T-cell (primary cell): ENCODE measurements at regions of chr10 and their contacts with region 1.

Region 1: DNA sequence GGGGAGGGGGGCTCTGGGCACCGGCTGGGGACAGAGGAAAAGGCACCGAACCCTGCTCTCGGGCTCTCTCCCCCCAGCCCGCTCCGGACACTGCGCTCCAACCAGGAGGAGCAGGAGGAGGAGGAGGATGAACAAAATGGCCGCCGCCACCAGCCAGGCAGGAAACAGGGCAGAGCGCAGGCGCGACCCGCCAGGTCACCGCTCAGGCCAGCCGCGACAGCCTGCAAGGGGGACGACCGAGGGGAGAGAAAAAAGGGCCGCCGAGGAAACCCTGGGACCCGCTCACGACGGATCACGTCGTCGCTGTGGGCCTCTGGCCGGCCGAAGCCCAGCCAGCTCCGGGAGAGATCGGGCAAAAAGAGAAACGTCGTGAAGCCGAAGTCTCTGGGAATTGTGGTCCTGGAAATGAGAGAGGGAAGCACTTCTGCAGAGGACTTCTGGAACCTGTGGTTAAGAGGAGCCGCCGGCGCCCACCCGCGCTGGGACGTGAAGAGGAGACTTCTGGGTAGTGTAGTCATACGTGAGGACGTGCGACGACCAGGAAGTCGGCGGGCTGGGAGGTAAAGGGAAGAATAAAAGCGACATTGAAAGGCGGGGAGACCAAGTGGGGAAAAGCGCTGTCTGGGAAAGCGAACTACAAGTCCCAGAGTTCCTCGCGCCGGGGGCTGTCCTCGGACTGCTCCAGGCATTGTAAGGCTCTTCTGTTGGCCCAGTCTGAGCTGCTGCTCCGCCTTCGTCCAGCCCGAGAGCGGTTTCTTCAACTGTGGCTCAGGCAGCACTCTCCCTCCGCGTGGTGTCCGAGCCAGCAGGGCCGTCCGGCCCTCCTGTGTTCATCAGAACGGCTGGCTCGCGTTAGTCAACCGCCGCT is at the start of gene TIAL1:
- DNase-seq: peak; percentile 81 to 96 (median 88)
- ATAC-seq: peak; percentile 85 to 89 (median 88)
- H3K4me3 ChIP-seq: peak within 1 kb of the TSS; percentile 93 to 99
- H3K4me3 Mint-ChIP-seq: peak within 1 kb of the TSS; percentile 88 to 99 (median 99)
- H3K27ac ChIP-seq: peak within 1 kb of the TSS; percentile 94
- H3K27ac Mint-ChIP-seq: peak within 1 kb of the TSS; percentile 98
- H3K4me1 ChIP-seq: peaks cover 19 to 30% of the 10 kb centered on the region in 2 experiments
- H3K4me1 Mint-ChIP-seq: peaks cover 48 to 49% (median 48%) of the 10 kb centered on the region in 3 donors
- H3K27me3 ChIP-seq: no peaks in the 10 kb centered on the region
- H3K27me3 Mint-ChIP-seq: no peaks in the 10 kb centered on the region
- total RNA-seq, gene TIAL1: 147 to 197 (median 156) TPM

Region 2: DNA sequence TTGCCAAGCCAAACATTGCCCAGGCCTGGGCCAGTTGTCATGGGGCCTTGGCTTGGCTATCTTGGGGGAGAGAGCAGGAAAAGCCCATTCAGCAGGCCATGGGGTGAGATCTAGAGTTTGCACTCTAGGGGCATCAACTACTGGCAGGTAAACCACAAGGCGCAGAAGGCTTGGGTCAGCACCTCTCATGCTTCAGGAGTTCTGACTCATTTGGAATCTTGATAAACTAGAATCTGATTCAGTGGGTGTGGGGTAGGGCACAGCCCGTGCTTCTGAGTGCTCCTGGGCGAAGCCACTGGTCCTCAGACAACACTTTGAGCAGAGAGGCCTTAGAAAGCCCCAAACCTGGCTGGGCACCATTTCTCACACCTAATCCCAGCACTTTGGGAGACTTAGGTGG is 135.4 kb before region 1 on chr10:
- CTCF ChIA-PET with region 1: no interaction called
- POLR2A ChIA-PET with region 1: no interaction called
- DNase-seq: no peak
- ATAC-seq: no peak
- H3K4me3 ChIP-seq: no peak overlapping the region
- H3K4me3 Mint-ChIP-seq: no peak overlapping the region
- H3K27ac ChIP-seq: no peak overlapping the region
- H3K27ac Mint-ChIP-seq: no peak overlapping the region
- H3K4me1 ChIP-seq: peaks cover 0 to 9% of the 10 kb centered on the region in 2 experiments
- H3K4me1 Mint-ChIP-seq: peaks cover 0 to 14% (median 2%) of the 10 kb centered on the region in 3 donors
- H3K27me3 ChIP-seq: peaks cover 0 to 12% of the 10 kb centered on the region in 2 experiments
- H3K27me3 Mint-ChIP-seq: peaks cover 0 to 3% of the 10 kb centered on the region in 2 donors

Region 3: DNA sequence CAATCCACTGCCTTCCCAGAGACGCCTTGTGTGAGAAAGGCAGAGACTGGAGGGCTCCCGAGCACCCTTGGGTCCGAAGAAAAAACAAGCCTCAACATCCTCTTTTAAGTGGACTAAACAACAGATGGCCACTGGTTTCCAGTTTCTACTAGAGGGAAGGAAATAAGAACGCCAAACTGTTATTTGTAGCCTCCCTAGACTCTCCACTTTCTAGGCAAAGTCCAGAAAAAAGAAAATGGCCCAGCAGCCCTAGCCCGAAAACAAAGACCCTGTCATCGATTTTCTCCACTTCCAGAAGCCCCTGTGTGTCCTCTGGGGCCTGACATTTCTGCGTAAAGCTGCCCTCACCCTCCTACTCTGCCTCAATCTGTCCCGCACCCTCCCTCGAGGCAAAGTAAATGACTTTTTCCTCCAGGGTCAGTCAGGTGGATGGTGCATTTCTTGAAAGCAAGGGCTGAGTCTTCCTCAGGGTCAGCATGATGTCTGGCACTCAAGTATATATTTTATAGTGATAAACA is 60.2 kb before region 1 on chr10:
- CTCF ChIA-PET with region 1: interaction called in 1 of 2 experiments, 10 read pairs
- POLR2A ChIA-PET with region 1: no interaction called
- DNase-seq: no peak
- ATAC-seq: no peak
- H3K4me3 ChIP-seq: peak overlapping the region in 1 of 2 donors; percentile 11
- H3K4me3 Mint-ChIP-seq: peak overlapping the region; percentile 38 to 85 (median 83)
- H3K27ac ChIP-seq: peak overlapping the region; percentile 37
- H3K27ac Mint-ChIP-seq: peak overlapping the region; percentile 96 to 98
- H3K4me1 ChIP-seq: peaks cover 39 to 76% of the 10 kb centered on the region in 2 experiments
- H3K4me1 Mint-ChIP-seq: peaks cover 83 to 89% (median 85%) of the 10 kb centered on the region in 3 donors
- H3K27me3 ChIP-seq: no peaks in the 10 kb centered on the region
- H3K27me3 Mint-ChIP-seq: no peaks in the 10 kb centered on the region

Region 4: DNA sequence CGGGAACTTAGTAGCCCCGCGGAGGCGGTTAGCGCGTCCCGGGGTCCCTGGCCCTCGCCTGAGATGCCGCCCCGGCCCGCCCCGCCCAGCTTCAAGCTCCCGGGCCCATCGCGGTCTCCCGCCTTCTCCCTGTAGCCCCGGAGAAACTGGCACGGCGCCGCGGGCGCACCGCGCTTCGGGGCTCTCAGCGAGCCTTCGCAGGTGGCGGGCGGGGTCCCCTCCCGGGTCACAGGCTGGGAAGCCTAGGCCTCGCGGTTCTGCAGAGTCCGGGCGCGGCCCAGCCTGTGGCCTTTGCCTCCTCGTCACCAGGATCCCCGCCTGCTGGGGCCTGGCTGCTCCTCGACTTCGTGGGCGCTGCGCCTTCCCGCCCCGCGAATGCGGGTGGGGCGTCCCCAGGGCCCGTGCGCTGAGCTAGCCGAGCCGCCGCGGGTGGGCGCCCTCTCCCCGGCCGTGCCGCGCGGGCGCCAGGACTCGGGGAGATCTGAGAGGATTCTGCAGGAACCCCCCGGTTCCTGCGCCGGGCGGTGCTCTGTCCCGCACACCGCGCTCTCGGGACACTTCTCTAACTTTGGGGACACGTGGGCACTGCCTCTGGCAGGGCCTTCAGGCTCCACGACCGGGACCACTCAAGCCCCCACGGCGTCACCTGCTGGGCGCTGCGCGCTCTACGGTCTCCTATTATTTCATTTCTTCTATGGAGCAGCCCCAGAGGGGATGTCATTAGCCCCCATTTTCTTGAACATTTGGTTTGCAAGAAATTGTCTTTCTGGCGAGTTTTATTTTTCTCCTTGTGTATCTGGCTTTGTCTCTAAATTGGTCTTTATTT is 53.6 kb before region 1 on chr10:
- CTCF ChIA-PET with region 1: interaction called, 3 to 10 read pairs
- POLR2A ChIA-PET with region 1: no interaction called
- DNase-seq: peak; percentile 18 to 77 (median 51)
- ATAC-seq: peak; percentile 49 to 58 (median 54)
- H3K4me3 ChIP-seq: peak overlapping the region; percentile 66 to 95
- H3K4me3 Mint-ChIP-seq: peak overlapping the region; percentile 83 to 92 (median 89)
- H3K27ac ChIP-seq: no peak overlapping the region
- H3K27ac Mint-ChIP-seq: peak overlapping the region; percentile 87 to 93
- H3K4me1 ChIP-seq: peaks cover 10 to 41% of the 10 kb centered on the region in 2 experiments
- H3K4me1 Mint-ChIP-seq: peaks cover 29 to 43% (median 40%) of the 10 kb centered on the region in 3 donors
- H3K27me3 ChIP-seq: peaks cover 0 to 7% of the 10 kb centered on the region in 2 experiments
- H3K27me3 Mint-ChIP-seq: peaks cover 0 to 5% of the 10 kb centered on the region in 2 donors

Region 5: GRCh38 chr10:120314442-120314841 is 717.7 kb after region 1 on chr10:
- CTCF ChIA-PET with region 1: no interaction called
- POLR2A ChIA-PET with region 1: no interaction called
- DNase-seq: no peak
- ATAC-seq: no peak
- H3K4me3 ChIP-seq: no peak overlapping the region
- H3K4me3 Mint-ChIP-seq: no peak overlapping the region
- H3K27ac ChIP-seq: no peak overlapping the region
- H3K27ac Mint-ChIP-seq: no peak overlapping the region
- H3K4me1 ChIP-seq: no peaks in the 10 kb centered on the region
- H3K4me1 Mint-ChIP-seq: no peaks in the 10 kb centered on the region
- H3K27me3 ChIP-seq: peaks cover 0 to 6% of the 10 kb centered on the region in 2 experiments
- H3K27me3 Mint-ChIP-seq: peaks cover 15 to 18% of the 10 kb centered on the region in 2 donors